A549 (cell line): ENCODE measurements at regions of chr20 and their contacts with region 1.

Region 1: DNA sequence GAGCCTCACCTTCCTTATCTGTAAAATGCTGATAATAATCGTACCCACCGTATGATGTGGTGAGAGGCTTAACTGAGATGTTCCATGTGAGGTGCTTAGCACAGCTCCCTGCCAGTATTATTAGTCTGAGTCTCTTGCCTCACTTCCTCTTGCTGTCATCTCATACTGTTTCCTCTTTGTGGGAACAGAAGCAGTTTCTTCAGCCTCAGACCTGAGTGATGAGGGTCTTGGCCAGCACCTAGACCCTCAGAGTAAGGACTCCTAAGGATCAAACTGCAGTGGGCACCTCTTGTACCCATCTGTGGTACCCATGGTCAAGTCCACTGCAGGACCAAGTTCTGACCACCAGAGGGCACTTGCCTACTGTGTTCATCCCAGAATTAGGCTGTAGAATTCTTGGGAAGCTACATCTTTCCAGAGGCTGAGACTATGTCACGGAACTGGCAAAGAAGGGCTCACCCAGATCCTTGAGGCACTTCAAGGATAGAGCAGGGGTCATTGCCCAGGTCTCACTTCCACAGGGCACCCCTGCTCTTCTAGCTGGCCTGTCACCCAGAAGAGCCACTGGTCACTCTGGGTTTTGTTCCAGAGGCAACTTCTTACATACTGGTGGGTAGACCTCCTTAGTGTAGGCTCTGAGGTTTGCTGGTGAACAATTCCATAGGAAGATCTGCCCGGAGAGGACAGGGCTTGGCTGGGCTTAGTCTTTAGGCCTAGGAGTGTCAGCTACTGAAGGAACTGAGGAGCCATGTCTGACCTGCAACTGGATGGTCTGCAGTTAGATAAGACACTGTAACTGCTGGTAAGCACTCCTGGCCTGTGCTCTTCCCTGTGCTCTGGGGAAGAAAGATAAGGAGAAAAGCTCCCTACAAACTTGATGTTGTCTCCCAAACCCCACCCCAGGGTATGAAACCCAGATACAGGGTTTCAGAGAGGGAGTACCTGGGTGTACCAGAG is 20.6 kb upstream of the SGK2 start:
- DNase-seq: peak; percentile 49 to 63
- ATAC-seq: peak; percentile 78 to 91
- H3K4me3 ChIP-seq: no peak overlapping the region
- H3K27ac ChIP-seq: 0 out of 6 replicates have a peak overlapping the region, but pooled peaks of 1 of the 2 experiments have one; percentile 20
- H3K4me1 ChIP-seq: peaks cover 7% of the 10 kb centered on the region; the same call in 2 of the 3 replicates
- CTCF ChIP-seq: peak; percentile 92
- EP300 ChIP-seq: no peak
- POLR2A ChIP-seq: no peak
- RAD21 ChIP-seq: peak; percentile 91 to 95

Region 2: GRCh38 chr20:43525021-43525420 is 13.2 kb before region 1 on chr20:
- CTCF ChIA-PET with region 1: interaction called, 55 read pairs
- POLR2A ChIA-PET with region 1: no interaction called
- DNase-seq: no peak
- ATAC-seq: no peak
- H3K4me3 ChIP-seq: no peak overlapping the region
- H3K27ac ChIP-seq: no peak overlapping the region
- H3K4me1 ChIP-seq: no peaks in the 10 kb centered on the region; the same call in 2 of the 3 replicates
- CTCF ChIP-seq: no peak
- EP300 ChIP-seq: no peak
- POLR2A ChIP-seq: no peak
- RAD21 ChIP-seq: no peak

Region 3: DNA sequence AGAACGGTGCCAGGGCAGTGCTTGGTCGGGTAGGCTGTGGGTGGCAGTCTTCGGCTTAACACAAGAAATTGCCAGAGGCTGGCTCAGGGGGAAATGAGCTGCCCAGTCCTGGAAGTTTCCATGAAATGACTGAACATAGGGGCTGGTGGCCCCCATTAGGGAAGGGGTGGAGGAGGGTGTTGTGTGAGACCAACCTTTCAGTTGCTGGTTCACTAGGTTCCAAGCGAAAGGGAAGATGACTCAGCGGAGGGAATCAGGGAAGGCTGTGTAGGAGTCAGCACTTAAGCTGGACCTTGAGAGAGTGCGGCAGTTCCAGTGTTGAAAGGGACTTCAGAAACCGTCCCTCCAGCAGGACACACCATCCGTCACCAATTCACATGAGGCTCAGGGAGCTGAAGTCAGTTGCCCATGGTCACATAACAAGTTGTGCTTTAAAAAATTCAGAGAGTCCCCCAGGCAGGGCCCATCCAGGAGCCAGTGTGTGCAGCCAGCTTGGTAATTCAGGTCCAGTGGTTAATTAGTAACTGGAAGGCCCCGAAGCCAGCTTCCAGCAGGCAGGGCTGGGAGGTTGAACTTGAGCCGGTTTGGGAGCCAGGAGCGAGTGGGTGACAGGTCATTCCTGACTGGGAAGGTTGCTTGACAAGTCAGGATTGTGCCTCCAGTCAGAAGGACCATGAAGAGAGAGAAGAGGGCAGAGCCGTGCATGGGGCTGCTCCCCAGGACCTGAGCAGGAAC is 20.4 kb after region 1 on chr20 and contains the start of gene SGK2:
- CTCF ChIA-PET with region 1: interaction called, 56 read pairs
- POLR2A ChIA-PET with region 1: no interaction called
- DNase-seq: peak; percentile 87 to 90
- ATAC-seq: peak; percentile 93 to 94
- H3K4me3 ChIP-seq: peak within 1 kb of the TSS; percentile 22; the same call in 1 of the 3 replicates
- H3K27ac ChIP-seq: peak within 1 kb of the TSS; percentile 97
- H3K4me1 ChIP-seq: peaks cover 40% of the 10 kb centered on the region
- CTCF ChIP-seq: no peak
- EP300 ChIP-seq: no peak
- POLR2A ChIP-seq: peak; percentile 33
- RAD21 ChIP-seq: no peak; a peak in 1 of 5 replicates
- polyA plus RNA-seq, gene SGK2: 9.4 and 10.4 TPM in 2 replicates

Region 4: GRCh38 chr20:43576108-43576507 is 37.9 kb after region 1 on chr20:
- CTCF ChIA-PET with region 1: interaction called, 32 read pairs
- POLR2A ChIA-PET with region 1: no interaction called
- DNase-seq: no peak
- ATAC-seq: no peak
- H3K4me3 ChIP-seq: no peak overlapping the region
- H3K27ac ChIP-seq: no peak overlapping the region
- H3K4me1 ChIP-seq: no peaks in the 10 kb centered on the region
- CTCF ChIP-seq: no peak
- EP300 ChIP-seq: no peak
- POLR2A ChIP-seq: no peak
- RAD21 ChIP-seq: no peak

Region 5: GRCh38 chr20:43681468-43681942 is 143.3 kb after region 1 on chr20:
- CTCF ChIA-PET with region 1: interaction called, 17 read pairs
- POLR2A ChIA-PET with region 1: no interaction called
- DNase-seq: no peak
- ATAC-seq: peak; percentile 43 to 55; a peak in 3 of 6 replicates
- H3K4me3 ChIP-seq: no peak overlapping the region
- H3K27ac ChIP-seq: no peak overlapping the region
- H3K4me1 ChIP-seq: no peaks in the 10 kb centered on the region
- CTCF ChIP-seq: no peak
- EP300 ChIP-seq: no peak
- POLR2A ChIP-seq: no peak
- RAD21 ChIP-seq: no peak

Region 6: DNA sequence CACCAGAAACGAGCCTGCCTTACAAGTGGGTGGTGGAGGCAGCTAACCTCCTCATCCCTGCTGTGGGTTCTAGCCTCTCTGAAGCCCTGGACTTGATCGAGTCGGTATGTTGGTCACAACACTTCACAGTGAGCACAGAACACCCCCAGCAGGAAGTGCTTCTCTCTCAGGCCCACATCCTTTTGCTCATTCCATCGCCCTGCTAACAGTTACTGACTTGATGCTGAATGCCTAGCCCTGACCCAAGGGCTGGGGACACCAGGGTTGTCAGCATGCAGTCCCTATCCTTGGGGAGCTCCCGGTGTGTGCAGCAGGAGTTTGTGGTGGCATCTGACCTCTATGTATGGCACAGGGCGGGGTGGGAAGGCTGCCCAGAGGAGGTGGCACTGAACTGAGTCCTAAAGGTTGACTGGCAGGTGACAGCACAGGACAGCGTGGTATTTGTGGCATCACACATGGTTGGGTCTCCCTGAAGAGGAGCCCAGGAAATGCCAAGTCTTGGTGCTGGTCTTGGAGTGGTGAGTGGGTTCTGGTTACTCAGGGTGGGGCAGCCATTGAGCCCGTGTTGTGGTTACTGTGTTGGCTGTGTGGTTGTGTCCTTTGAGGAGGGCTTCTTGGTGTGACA is 161.9 kb after region 1 on chr20:
- CTCF ChIA-PET with region 1: interaction called, 11 read pairs
- POLR2A ChIA-PET with region 1: no interaction called
- DNase-seq: no peak
- ATAC-seq: no peak
- H3K4me3 ChIP-seq: no peak overlapping the region
- H3K27ac ChIP-seq: no peak overlapping the region
- H3K4me1 ChIP-seq: no peaks in the 10 kb centered on the region
- CTCF ChIP-seq: no peak
- EP300 ChIP-seq: no peak
- POLR2A ChIP-seq: no peak
- RAD21 ChIP-seq: no peak

Region 7: GRCh38 chr20:44092551-44093248 is 554.5 kb after region 1 on chr20:
- CTCF ChIA-PET with region 1: interaction called, 17 read pairs
- POLR2A ChIA-PET with region 1: no interaction called
- DNase-seq: peak in 1 of 2 experiments; percentile 60
- ATAC-seq: peak; percentile 66 to 80; a peak in 3 of 6 replicates
- H3K4me3 ChIP-seq: no peak overlapping the region
- H3K27ac ChIP-seq: no peak overlapping the region
- H3K4me1 ChIP-seq: peaks cover 4% of the 10 kb centered on the region; the same call in 2 of the 3 replicates
- CTCF ChIP-seq: peak; percentile 66
- EP300 ChIP-seq: no peak
- POLR2A ChIP-seq: no peak
- RAD21 ChIP-seq: peak; percentile 59 to 61